ENCODE measurements at regions of chr4 and their contacts with region 1.

Region 1: GRCh38 chr4:63831590-63832155 is 577.6 kb downstream of the TECRL start:
- DNase-seq: no peak
- H3K4me3 Mint-ChIP-seq: no peak overlapping the region
- H3K27ac Mint-ChIP-seq: no peak overlapping the region
- H3K4me1 Mint-ChIP-seq: no peaks in the 10 kb centered on the region
- H3K27me3 Mint-ChIP-seq: no peaks in the 10 kb centered on the region

Region 2: GRCh38 chr4:63851496-63851895 is 19.8 kb after region 1 on chr4:
- intact Hi-C with region 1: loop called (anchors 2 kb)
- DNase-seq: no peak
- H3K4me3 Mint-ChIP-seq: no peak overlapping the region
- H3K27ac Mint-ChIP-seq: no peak overlapping the region
- H3K4me1 Mint-ChIP-seq: no peaks in the 10 kb centered on the region
- H3K27me3 Mint-ChIP-seq: no peaks in the 10 kb centered on the region